GM13977 (cell line): ENCODE measurements at regions of chr3 and their contacts with region 1.

Region 1: GRCh38 chr3:111723293-111724215 is 128.4 kb upstream of the ZBED2 start:
- DNase-seq: no peak
- CTCF ChIP-seq: no peak

Region 2: DNA sequence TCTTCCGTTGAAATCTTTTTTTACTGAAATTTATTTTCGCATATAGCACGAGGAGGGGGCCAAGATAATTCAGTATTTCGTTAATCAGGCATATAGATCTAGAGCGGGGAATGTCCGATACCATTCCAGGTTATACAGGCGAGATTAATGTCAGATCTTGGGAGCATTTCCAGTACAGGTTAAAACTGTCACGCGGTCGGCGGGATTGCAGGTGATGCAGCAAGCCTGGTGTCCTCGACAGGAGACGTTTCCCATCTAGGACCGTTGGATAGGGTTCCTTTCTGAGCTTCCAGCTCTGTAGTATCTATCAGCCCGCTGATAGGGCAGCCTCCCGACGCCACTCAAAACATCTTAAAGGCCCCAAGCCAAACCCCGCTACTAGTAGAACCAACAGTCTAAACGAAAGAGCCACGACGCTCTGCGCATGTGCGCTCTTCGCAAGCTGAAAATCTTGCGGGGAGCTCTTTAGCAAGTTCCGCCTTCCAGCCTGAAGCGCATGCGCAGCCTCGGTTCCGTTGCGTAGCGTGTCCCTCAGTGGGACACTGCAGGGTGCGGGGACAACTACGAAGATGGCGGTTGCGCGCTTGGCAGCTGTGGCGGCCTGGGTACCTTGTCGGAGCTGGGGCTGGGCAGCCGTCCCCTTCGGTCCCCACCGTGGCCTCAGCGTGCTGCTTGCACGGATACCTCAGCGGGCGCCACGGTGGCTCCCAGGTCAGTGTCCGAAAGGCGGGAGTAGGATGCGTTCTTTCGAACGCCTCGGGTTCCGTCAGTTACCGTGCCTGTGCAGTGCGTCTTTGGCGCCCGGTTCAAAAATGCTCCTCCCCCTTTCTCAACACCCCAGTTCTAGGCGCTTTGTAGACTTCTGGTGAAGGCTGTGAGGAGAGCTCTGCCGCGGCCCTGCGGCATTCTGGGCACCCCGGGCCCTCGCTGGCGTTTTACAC is 255.2 kb after region 1 on chr3 and contains the start of gene ABHD10:
- in situ Hi-C with region 1: loop called (anchors 10 kb)
- DNase-seq: peak; percentile 86
- CTCF ChIP-seq: no peak

Region 3: DNA sequence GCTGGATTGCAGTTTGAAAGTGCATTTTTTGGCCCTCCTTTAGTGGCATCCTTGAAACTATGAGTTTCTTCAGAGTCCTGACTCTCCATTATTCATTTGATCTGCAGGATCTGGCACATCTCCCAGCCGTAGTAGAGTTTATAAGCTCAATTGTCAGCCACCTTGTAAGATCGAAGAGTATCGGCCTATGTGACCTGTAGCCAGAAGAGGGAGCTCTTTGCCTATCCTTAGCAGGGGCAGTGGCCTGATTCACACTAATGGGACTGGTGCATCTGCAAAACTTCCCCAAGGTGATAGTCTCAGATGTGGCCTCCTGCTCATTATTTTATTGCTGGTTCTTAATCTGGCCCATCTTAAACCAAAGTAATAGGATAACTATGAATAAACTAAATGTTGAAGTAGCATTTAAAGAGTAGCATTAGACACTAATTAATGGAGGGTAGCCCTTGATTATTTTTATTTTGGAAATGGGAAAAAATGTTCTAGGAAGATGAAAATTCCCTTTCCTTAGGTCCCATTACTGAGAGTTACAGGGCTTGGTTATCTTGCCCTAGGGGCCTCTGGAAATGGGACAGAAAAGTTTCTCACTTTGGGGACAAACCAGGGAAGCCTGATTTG is 388.3 kb after region 1 on chr3:
- in situ Hi-C with region 1: no loop called
- DNase-seq: peak; percentile 65
- CTCF ChIP-seq: peak; percentile 82